Activated T-helper 2 cell treated with anti-CD3 and anti-CD28 coated beads, Interferon-gamma antibody, Interleukin-2, Interleukin-4, amounts not matched to agents 10 μg/mL and 5 μg/mL and 100 μg/mL, durations not matched to agents 14 hours and 24 hours and 36 hours (primary cell): ENCODE measurements at regions of chr9 and their contacts with region 1.

Region 1: DNA sequence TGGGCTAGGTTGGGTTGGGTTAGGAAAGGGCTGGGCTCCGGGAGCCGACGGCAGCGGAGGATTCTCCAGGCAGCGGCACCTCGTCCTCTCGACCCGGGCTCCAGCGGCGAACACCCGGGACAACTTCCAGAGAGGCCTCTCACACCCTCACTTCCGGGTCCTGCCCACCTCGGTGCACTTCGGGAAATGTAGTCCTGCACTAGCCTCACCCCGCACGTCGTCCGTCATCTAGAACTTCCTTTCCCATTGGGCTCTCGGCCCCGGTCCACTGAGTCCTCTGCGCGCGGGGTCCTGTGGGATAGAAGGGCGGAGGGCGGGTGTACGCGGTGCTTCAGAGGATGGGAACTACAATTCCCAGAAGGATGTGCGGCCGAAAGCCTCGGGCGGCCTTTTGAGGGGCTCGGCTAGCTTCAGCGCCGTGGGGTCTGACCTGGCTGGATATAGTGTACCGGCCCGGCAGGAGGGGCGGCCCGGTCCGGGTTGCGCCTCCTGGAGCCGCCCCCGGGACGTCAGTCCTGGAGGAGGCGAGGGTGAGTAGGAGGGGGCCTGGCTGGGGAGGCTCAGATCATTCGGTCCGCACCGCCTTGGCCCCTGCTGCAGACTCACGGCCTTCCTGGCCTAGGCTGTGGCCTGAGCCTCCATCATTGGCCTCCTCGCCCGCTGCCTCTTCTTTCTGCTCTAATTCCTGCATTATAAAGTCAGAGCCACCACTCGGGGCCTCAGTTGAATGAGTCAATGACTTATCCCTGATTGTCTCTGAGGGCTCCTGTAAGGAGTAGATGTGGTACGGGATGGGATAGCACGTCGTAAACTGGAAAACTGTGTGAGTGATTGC is at the starts of genes ERP44 and INVS:
- DNase-seq: peak; percentile 97
- H3K4me3 Mint-ChIP-seq: peak within 1 kb of the TSS; percentile 96
- H3K27ac Mint-ChIP-seq: peak within 1 kb of the TSS; percentile 91
- H3K4me1 Mint-ChIP-seq: peaks cover 27% of the 10 kb centered on the region
- H3K27me3 Mint-ChIP-seq: no peaks in the 10 kb centered on the region
- total RNA-seq, gene ERP44: 21.5 and 22.0 TPM in 2 replicates
- total RNA-seq, gene INVS: 18.8 and 20.5 TPM in 2 replicates

Region 2: GRCh38 chr9:99221621-99222415 is 877.3 kb before region 1 on chr9 and contains the starts of genes ALG2 and SEC61B:
- intact Hi-C with region 1: loop called (anchors 10 kb)
- DNase-seq: peak; percentile 88
- H3K4me3 Mint-ChIP-seq: peak within 1 kb of the TSS; percentile 93
- H3K27ac Mint-ChIP-seq: peak within 1 kb of the TSS; percentile 100
- H3K4me1 Mint-ChIP-seq: peaks cover 51% of the 10 kb centered on the region
- H3K27me3 Mint-ChIP-seq: no peaks in the 10 kb centered on the region
- total RNA-seq, gene ALG2: 39.5 and 41.7 TPM in 2 replicates
- total RNA-seq, gene SEC61B: 208 and 223 TPM in 2 replicates

Region 3: GRCh38 chr9:100117316-100117715 is 18.2 kb after region 1 on chr9:
- intact Hi-C with region 1: no loop called
- DNase-seq: no peak
- H3K4me3 Mint-ChIP-seq: no peak overlapping the region
- H3K27ac Mint-ChIP-seq: no peak overlapping the region
- H3K4me1 Mint-ChIP-seq: peaks cover 13% of the 10 kb centered on the region
- H3K27me3 Mint-ChIP-seq: no peaks in the 10 kb centered on the region

Region 4: GRCh38 chr9:100206899-100207298 is 107.8 kb after region 1 on chr9:
- intact Hi-C with region 1: no loop called
- DNase-seq: no peak
- H3K4me3 Mint-ChIP-seq: no peak overlapping the region
- H3K27ac Mint-ChIP-seq: no peak overlapping the region
- H3K4me1 Mint-ChIP-seq: peaks cover 8% of the 10 kb centered on the region
- H3K27me3 Mint-ChIP-seq: no peaks in the 10 kb centered on the region